ENCODE measurements at regions of chr3 and their contacts with region 1.

Region 1: DNA sequence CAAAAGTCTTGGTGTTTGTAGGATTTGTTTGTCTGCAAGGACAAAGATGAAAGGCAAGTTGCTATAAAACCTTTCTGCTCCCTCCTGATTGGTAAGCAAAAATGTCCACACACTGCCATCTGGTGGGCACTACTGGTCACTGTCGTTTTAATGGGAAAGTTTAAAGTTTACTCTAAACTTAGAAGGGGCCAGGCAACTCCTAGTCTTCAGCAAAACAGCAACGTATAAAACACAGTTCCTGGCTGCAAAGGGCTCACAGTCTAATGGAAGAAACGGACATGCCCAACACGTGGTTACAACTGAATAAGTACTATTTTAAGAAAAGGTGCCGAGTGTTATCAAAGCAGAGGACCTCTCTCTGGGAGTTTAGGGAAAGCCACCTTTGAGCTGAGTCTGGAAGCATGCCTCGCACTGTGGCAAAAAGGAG is 23.7 kb upstream of the TPRG1 start:
- DNase-seq: peak; percentile 52
- CTCF ChIP-seq: peak; percentile 75

Region 2: DNA sequence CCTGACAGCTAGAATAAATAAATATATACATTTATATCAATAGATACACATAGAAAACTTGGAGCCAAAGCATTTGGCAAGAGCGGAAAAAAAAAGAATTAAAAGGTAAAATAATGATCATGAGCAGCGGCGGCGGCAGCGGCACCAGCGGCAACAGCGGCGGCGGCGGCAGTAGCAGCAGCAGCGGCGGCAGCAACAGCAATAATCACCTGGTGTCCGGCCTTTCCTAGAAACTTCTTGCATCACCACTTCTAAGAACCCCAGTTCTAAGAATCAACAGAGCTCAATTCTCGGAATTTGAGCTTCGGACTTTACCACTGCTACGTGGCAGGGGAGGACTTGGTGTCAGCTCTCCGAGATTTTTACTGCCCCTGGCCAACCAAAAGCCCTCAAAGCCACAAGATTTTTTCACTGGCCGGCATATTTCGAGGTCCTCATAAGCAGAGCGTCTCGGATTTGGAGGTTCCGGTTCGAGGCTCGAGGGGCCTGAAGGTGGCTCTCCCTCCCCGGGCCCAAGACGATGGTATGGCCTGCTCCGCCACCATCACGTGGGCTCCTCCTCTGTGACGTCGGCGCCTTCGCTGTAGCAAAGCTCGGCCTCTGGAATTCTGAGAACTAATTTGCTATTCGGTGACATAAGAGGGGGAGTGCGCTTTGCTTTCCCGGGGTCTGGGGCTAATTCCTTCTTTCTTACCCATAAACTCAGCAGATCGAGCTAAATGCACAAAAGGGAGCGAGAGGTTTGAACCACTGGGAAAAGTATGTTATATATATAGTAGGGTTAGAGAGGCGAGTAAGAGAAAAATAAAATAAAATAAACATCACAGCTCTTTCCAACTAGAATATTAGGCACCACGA is 1402.7 kb before region 1 on chr3 and contains the start of gene BCL6:
- in situ Hi-C with region 1: loop called (anchors 25 kb)
- DNase-seq: peak; percentile 77
- CTCF ChIP-seq: no peak

Region 3: GRCh38 chr3:188507244-188507720 is 640.8 kb before region 1 on chr3:
- in situ Hi-C with region 1: no loop called
- DNase-seq: no peak
- CTCF ChIP-seq: no peak